ENCODE measurements at regions of chr5 and their contacts with region 1.

Region 1: GRCh38 chr5:41510176-41510831 is at the start of gene PLCXD3:
- DNase-seq: peak; percentile 61 to 87 (median 73)
- ATAC-seq: peak; percentile 93 to 94
- H3K4me3 ChIP-seq: peak within 1 kb of the TSS; percentile 74
- H3K27ac ChIP-seq: peak within 1 kb of the TSS; percentile 44
- H3K4me1 ChIP-seq: no peaks in the 10 kb centered on the region
- H3K27me3 ChIP-seq: no peaks in the 10 kb centered on the region
- total RNA-seq, gene PLCXD3: 32.7 to 87.4 (median 62.3) TPM

Region 2: GRCh38 chr5:41264019-41264418 is 246.3 kb before region 1 on chr5:
- intact Hi-C with region 1: loop called in 1 of 4 experiments (anchors 5 kb)
- DNase-seq: peak in 1 of 3 donors; percentile 49
- ATAC-seq: peak; percentile 91 to 98
- H3K4me3 ChIP-seq: no peak overlapping the region
- H3K27ac ChIP-seq: peak overlapping the region; percentile 30
- H3K4me1 ChIP-seq: peaks cover 3% of the 10 kb centered on the region
- H3K27me3 ChIP-seq: no peaks in the 10 kb centered on the region

Region 3: GRCh38 chr5:41457094-41457493 is 53.2 kb before region 1 on chr5:
- intact Hi-C with region 1: loop called in 1 of 4 experiments (anchors 10 kb)
- DNase-seq: peak in 2 of 3 donors; percentile 45 to 52
- ATAC-seq: peak; percentile 85 to 88
- H3K4me3 ChIP-seq: no peak overlapping the region
- H3K27ac ChIP-seq: peak overlapping the region; percentile 97
- H3K4me1 ChIP-seq: no peaks in the 10 kb centered on the region
- H3K27me3 ChIP-seq: no peaks in the 10 kb centered on the region

Region 4: GRCh38 chr5:42612750-42613366 is 1102.6 kb after region 1 on chr5:
- intact Hi-C with region 1: no loop called
- DNase-seq: no peak
- ATAC-seq: peak in 1 of 2 donors; percentile 51
- H3K4me3 ChIP-seq: no peak overlapping the region
- H3K27ac ChIP-seq: no peak overlapping the region
- H3K4me1 ChIP-seq: peaks cover 1% of the 10 kb centered on the region
- H3K27me3 ChIP-seq: no peaks in the 10 kb centered on the region

Measured in right cardiac atrium (tissue), 5 donors.